Breast epithelium (tissue), 4 donors: ENCODE measurements at regions of chr7 and their contacts with region 1.

Region 1: GRCh38 chr7:51242007-51242691 is 74.5 kb downstream of the COBL start:
- DNase-seq: no peak
- H3K4me3 ChIP-seq: no peak overlapping the region
- H3K27ac ChIP-seq: no peak overlapping the region
- H3K4me1 ChIP-seq: no peaks in the 10 kb centered on the region
- H3K27me3 ChIP-seq: no peaks in the 10 kb centered on the region
- CTCF ChIP-seq: no peak
- POLR2A ChIP-seq: no peak

Region 2: DNA sequence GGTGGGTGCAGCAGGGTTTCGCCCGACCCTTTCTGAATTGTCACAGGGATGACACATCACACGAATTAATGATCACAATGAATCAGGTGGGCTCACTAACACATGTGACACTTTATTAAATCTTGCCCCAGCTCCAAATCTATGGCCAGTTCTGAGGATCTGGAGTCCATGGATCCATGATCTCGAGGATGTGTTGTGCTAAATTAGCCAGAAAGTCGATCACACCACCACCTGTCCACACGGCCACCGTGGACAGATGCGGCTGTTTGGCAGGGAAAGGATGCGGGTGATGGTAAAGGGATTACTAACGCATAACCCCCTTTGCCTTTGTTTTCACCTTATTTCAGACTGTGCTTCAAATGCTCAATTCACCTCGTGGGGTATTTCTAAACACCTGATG is 21.9 kb before region 1 on chr7:
- intact Hi-C with region 1: loop called (anchors 1 kb)
- DNase-seq: no peak
- H3K4me3 ChIP-seq: no peak overlapping the region
- H3K27ac ChIP-seq: no peak overlapping the region
- H3K4me1 ChIP-seq: no peaks in the 10 kb centered on the region
- H3K27me3 ChIP-seq: no peaks in the 10 kb centered on the region
- CTCF ChIP-seq: no peak
- POLR2A ChIP-seq: no peak

Region 3: DNA sequence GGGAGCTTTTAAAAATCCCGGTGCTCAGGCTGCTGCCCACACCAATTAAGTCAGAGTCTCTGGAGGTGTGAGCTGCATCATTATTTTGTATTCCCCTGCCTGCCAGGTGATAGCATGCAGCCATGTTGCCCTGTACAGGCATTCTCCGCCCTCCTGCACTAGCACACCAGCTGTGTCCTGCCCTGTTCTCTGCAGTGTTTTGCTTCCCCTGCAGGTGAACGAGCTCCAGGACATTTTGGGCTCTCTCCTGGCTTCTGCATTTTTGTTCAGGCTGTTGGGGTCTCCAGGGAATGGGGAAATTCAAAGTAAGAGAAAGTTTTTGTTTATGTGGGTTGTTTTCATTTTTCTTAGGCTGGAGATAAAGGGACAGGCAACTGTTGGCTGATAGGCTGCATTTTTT is 345.5 kb after region 1 on chr7:
- intact Hi-C with region 1: no loop called
- DNase-seq: no peak
- H3K4me3 ChIP-seq: no peak overlapping the region
- H3K27ac ChIP-seq: no peak overlapping the region
- H3K4me1 ChIP-seq: no peaks in the 10 kb centered on the region
- H3K27me3 ChIP-seq: no peaks in the 10 kb centered on the region
- CTCF ChIP-seq: no peak
- POLR2A ChIP-seq: no peak